H1 (cell line): ENCODE measurements at regions of chr16 and their contacts with region 1.

Region 1: GRCh38 chr16:81385031-81385756 is 59.4 kb upstream of the CMIP start:
- DNase-seq: no peak
- H3K4me3 ChIP-seq: no peak overlapping the region
- H3K27ac ChIP-seq: no peak overlapping the region
- H3K4me1 ChIP-seq: peaks cover 0 to 6% (median 2%) of the 10 kb centered on the region in 4 experiments; a peak in 3 of 7 replicates
- H3K27me3 ChIP-seq: no peaks in the 10 kb centered on the region
- CTCF ChIP-seq: no peak
- EP300 ChIP-seq: no peak
- POLR2A ChIP-seq: no peak
- RAD21 ChIP-seq: no peak

Region 2: GRCh38 chr16:81403616-81404373 is 18.6 kb after region 1 on chr16:
- CTCF ChIA-PET with region 1: interaction called, 11 read pairs
- POLR2A ChIA-PET with region 1: no interaction called
- DNase-seq: peak; percentile 53 to 97
- H3K4me3 ChIP-seq: peak overlapping the region in 2 of 4 experiments; percentile 19 to 49; a peak in 4 of 8 replicates
- H3K27ac ChIP-seq: no peak overlapping the region
- H3K4me1 ChIP-seq: peaks cover 0 to 5% (median 2%) of the 10 kb centered on the region in 4 experiments; a peak in 4 of 7 replicates
- H3K27me3 ChIP-seq: no peaks in the 10 kb centered on the region; a peak in 2 of 7 replicates
- CTCF ChIP-seq: peak; percentile 92 to 95 (median 93)
- EP300 ChIP-seq: no peak
- POLR2A ChIP-seq: no peak
- RAD21 ChIP-seq: peak; percentile 98 to 99